Endothelial cell of umbilical vein (primary cell): ENCODE measurements at regions of chr14 and their contacts with region 1.

Region 1: GRCh38 chr14:88613552-88614010 is 50.7 kb downstream of the ZC3H14 start:
- DNase-seq: peak; percentile 81
- H3K4me3 ChIP-seq: no peak overlapping the region
- H3K27ac ChIP-seq: peak overlapping the region; percentile 78
- H3K4me1 ChIP-seq: peaks cover 39% of the 10 kb centered on the region
- H3K27me3 ChIP-seq: no peaks in the 10 kb centered on the region
- CTCF ChIP-seq: no peak
- POLR2A ChIP-seq: no peak

Region 2: GRCh38 chr14:87368752-87369151 is 1244.8 kb before region 1 on chr14:
- CTCF ChIA-PET with region 1: no interaction called
- POLR2A ChIA-PET with region 1: no interaction called
- dilution Hi-C with region 1: no loop called
- intact Hi-C with region 1: no loop called
- DNase-seq: no peak
- H3K4me3 ChIP-seq: no peak overlapping the region
- H3K27ac ChIP-seq: no peak overlapping the region
- H3K4me1 ChIP-seq: no peaks in the 10 kb centered on the region
- H3K27me3 ChIP-seq: no peaks in the 10 kb centered on the region
- CTCF ChIP-seq: no peak
- POLR2A ChIP-seq: no peak

Region 3: DNA sequence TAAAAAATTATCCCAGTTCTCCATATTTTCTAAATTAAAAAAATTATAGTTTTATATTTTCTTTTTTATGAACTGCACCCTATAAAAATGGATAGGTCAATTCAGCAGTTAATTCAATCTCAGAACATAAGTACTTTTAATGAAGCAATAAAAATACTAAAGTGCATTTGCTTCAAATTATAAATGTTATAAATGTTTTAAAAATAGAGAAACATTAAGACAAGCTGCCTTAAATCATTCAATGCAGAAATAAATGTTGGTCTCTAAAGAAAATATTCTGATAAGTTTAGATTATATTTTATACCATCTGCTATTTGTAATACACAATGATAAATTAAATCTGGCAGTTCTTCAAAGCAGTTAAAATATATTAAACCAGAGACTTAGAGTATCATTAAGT is 14.9 kb after region 1 on chr14:
- CTCF ChIA-PET with region 1: interaction called, 10 read pairs
- POLR2A ChIA-PET with region 1: no interaction called
- dilution Hi-C with region 1: no loop called
- intact Hi-C with region 1: no loop called
- DNase-seq: no peak
- H3K4me3 ChIP-seq: no peak overlapping the region
- H3K27ac ChIP-seq: no peak overlapping the region
- H3K4me1 ChIP-seq: no peaks in the 10 kb centered on the region
- H3K27me3 ChIP-seq: no peaks in the 10 kb centered on the region
- CTCF ChIP-seq: no peak
- POLR2A ChIP-seq: no peak